Motor neuron (in vitro differentiated cells): ENCODE measurements at regions of chr6 and their contacts with region 1.

Region 1: GRCh38 chr6:52664186-52664990 is 6.5 kb upstream of the TMEM14A start:
- ATAC-seq: peak; percentile 90 to 99 (median 98)
- H3K4me3 ChIP-seq: peak overlapping the region; percentile 52 to 83 (median 63)
- H3K27ac ChIP-seq: peak overlapping the region in 1 of 2 donors; percentile 9
- H3K4me1 ChIP-seq: peaks cover 9 to 11% of the 10 kb centered on the region in 2 donors

Region 2: DNA sequence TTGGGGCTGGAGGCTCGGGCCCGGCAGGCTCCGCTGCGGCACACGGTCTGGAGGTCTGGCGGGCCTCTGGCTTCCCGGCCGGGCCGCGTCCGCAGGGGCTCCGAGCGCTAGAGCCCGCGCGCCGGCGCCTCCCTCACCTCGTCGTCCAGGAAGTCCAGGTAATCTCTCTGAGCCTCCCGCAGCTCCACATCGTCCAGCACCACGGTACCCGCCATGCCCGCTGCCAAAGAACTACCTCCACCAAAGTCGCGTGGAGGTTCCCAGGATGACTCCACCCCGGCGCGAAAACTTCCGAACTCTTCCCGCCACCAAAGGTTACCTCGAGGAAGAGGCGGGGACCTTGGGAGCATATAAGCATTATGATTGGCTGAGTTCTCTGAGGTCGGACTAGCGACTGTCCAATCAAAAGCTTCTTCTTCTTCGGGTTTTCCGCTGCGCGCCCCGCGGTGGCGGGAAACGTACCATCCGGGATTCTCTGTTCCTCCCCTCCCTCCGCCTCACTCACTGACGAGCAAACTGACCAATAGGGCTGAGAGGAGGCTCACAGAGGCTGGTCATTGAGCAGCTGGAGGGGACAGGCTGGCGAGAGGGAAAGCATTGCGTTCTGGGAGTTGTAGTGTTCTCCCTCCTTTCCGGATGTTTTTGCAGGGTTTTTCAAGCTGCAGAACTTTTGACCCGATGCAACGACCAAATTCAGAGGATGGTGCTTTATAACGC is 379.8 kb before region 1 on chr6 and contains the start of gene MCM3:
- in situ Hi-C with region 1: loop called in 1 of 9 experiments (anchors 25 kb)
- ATAC-seq: peak; percentile 97 to 100 (median 99)
- H3K4me3 ChIP-seq: peak within 1 kb of the TSS; percentile 55 to 78 (median 64)
- H3K27ac ChIP-seq: peak within 1 kb of the TSS in 1 of 2 donors; percentile 9
- H3K4me1 ChIP-seq: peaks cover 2 to 8% of the 10 kb centered on the region in 2 donors
- total RNA-seq, gene MCM3: 12.7 to 92.8 (median 19.4) TPM

Region 3: DNA sequence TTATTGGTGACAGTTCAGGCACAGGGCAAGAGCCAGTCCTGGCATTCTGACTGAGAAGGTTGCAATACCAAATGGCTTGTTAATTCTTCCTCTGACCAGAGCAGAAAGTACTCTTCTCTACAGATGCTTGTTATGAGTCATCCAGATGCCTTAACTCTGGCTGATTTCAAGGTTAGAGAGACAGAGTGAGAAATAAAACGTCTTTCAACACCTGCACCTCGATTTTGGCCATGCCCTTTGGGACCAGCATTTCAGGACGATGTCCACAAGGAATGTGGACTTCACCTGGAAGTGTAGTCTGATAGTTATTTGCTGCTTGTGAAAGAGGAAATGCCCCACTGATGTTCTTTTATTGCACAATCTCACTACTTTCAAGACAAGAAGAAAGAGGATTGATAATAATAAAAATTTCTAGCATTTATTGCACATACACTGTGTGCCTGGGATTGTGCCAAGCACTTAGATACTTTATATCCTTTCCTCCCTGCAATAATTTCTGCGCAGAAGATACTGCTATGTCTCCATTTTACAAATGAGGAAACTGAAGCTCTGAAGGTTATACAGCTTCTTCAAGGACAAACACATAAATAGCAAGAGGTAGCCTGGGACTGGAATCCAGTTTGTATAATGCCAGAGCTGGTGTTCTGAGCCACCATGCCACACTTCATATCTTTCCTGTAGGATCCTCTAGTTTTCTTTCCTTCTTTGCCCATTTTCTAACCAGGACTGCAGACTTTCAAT is 346.4 kb before region 1 on chr6:
- in situ Hi-C with region 1: loop called in 1 of 9 experiments (anchors 25 kb)
- ATAC-seq: peak in 5 of 8 experiments; percentile 30 to 96 (median 57)
- H3K4me3 ChIP-seq: no peak overlapping the region
- H3K27ac ChIP-seq: no peak overlapping the region
- H3K4me1 ChIP-seq: no peaks in the 10 kb centered on the region